Cardiac septum (tissue), 1 donor: ENCODE measurements at regions of chr16 and their contacts with region 1.

Region 1: GRCh38 chr16:1492923-1493745 is at the start of gene TELO2:
- DNase-seq: peak; percentile 94
- total RNA-seq, gene TELO2: 17.7 TPM

Region 2: GRCh38 chr16:1285669-1286516 is 207.2 kb before region 1 on chr16:
- intact Hi-C with region 1: no loop called
- DNase-seq: no peak

Region 3: GRCh38 chr16:1420111-1420540 is 73.0 kb before region 1 on chr16:
- intact Hi-C with region 1: loop called (anchors 5 kb)
- DNase-seq: no peak

Region 4: DNA sequence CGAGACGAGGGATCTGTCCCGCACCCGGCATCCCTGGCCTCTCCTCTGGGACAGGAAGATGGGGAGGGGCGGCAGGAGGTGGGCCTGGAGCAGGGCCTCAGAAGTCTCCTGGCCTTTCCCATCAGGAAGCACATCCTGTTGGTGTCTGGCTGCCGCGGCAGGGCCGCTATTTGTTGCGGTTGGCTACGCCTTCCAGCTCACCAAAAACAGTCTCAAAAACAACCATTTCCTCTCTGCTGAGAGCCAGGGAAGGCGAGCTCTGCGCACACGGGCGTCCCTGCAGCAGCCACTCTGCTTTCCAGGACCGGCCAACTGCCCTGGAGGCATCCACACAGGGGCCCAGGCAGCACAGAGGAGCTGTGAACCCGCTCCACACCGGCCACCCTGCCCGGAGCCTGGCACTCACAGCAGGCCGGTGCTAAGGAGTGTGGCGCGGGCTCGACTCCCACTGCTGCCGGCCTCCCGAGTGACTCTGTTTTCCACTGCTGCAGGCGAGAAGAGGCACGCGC is 40.4 kb after region 1 on chr16 and contains the start of gene TMEM204:
- intact Hi-C with region 1: loop called (anchors 1 kb)
- DNase-seq: peak; percentile 88
- total RNA-seq, gene TMEM204: 19.8 TPM

Region 5: DNA sequence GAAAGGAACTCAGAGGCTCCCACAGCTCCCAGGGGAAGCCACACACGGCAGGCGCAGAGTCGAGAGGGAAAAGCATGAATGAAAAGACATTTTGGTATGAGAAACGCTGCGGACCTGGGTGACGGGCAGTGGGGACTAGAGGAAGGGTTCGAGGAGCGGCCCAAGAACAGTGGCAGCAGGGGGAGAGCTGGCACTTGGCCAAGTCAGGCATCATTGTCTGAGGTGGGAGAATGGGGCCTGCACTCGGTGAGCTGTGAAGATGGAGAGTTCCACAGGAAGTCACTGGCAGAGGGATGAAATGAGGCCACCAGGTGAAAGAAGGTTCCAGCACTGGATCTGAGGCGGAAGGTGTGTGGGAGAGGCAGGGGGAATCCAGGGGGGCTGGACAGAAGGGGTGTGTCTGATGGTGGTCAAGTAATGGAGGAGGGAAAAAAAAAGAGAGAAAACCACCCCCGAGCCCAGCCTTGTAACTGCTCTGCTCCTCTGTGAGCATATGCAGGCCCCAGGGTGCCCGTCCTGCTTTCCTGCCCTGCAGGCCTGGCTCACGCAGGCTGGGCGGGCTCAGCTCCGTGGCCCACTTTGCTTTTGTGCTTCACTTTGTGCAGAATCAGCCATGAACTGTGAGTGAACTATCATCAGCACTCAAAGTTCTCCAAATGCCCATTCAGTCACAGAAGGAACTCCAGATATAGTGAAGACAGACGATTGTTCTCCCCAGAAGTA is 72.1 kb after region 1 on chr16:
- intact Hi-C with region 1: loop called (anchors 5 kb)
- DNase-seq: no peak

Region 6: DNA sequence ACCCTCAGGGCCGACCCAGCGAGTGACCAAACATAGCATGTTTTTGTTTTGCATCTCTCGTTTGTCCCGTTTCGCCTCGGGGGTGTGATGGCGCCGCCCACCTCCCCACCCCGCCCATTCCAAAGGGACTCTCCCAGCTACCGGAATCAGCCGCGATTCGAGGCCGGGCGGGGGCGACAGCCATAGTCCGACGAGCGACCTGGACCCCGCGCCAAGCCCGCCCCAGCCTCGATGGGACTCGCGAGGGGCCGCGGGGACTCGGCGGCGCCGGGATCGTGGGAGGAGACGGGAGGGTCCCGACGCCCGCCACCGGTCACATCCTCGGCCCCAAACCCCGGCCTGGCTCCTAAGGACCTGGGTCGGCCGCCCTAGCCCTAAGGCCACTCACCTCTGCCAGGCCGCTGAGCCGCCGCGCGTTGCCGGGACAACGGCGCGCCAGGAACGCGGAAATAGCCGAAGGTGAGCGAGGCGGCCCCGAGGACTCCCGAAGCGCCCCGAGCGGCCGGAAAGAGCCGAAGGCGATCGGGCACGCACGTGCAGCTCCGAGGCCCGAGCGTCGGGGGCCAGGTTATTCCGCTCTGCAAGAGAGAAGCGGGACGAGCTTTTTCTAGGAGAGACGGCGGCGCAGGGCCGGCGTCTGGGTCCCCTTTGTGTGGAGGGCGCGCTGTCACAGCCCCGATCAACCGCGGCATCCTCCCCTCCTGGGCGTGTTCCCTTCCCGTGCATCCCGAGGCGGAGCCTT is 117.3 kb after region 1 on chr16:
- intact Hi-C with region 1: loop called (anchors 10 kb)
- DNase-seq: peak; percentile 90

Region 7: GRCh38 chr16:1635070-1635469 is 141.9 kb after region 1 on chr16:
- intact Hi-C with region 1: no loop called
- DNase-seq: no peak